ENCODE measurements at regions of chr1 and their contacts with region 1.

Region 1: GRCh38 chr1:19704247-19705113 is 39.8 kb downstream of the HTR6 start:
- DNase-seq: peak; percentile 90
- ATAC-seq: peak; percentile 93
- H3K4me3 Mint-ChIP-seq: peak overlapping the region; percentile 33
- H3K27ac Mint-ChIP-seq: no peak overlapping the region
- H3K4me1 Mint-ChIP-seq: peaks cover 14% of the 10 kb centered on the region
- H3K27me3 Mint-ChIP-seq: no peaks in the 10 kb centered on the region
- CTCF ChIP-seq: peak; percentile 95

Region 2: DNA sequence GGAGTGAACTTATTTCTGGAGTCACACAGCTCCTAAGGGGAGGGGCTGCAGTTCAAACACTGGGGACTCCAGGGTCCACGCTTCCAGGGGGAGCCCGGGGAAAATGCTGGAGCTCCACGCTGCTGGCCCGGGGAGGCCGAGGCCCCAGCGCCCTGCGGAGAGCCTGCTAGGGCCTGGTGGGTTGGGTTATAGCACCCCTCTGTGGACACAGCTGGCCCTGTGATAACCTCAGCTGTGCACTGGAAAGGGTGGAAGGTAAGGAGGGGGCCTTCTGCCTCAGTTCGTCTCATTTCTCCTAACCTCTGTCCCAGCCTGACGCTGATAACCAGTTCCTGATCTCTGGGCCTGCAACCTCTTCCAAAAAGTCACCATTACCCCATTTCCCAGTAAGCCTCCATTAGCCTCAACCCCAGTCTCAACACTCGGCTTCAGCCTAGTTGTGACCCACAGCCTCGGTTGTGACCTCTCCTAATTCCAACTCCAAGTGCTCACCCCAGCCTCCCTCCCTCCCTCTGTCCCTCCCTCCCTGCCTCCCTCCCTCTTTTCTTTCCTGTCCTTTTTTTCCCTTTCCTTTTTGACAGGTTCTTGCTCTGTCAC is 53.2 kb before region 1 on chr1:
- CTCF ChIA-PET with region 1: interaction called, 23 read pairs
- POLR2A ChIA-PET with region 1: no interaction called
- DNase-seq: peak; percentile 68
- ATAC-seq: peak; percentile 34
- H3K4me3 Mint-ChIP-seq: no peak overlapping the region
- H3K27ac Mint-ChIP-seq: no peak overlapping the region
- H3K4me1 Mint-ChIP-seq: peaks cover 13% of the 10 kb centered on the region
- H3K27me3 Mint-ChIP-seq: peaks cover 7% of the 10 kb centered on the region
- CTCF ChIP-seq: 0 out of 2 replicates have a peak, but pooled peaks have one; percentile 16

Region 3: DNA sequence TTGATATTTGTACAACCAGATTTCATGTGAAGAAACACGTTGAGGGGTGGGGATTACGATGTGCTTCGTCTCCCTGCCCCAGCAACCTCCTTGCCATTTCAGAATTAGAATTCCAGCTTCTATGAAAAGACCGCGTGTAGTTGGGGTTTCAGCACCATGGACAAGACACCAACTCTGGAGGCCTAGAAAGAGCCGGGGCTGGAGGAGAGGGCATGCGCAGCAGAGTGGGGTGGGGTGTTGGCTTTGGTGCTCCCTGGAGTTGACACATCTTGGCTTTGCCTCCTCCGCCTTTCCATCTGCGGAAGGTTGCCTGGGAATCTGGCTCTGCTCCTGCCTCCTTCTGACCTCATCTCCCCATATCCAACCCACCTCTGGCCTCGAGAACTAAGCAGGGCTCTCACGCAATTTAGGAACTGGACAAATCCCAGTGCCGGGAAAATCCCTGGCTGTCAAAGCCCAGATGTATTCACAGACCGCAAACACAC is 28.0 kb before region 1 on chr1:
- CTCF ChIA-PET with region 1: interaction called, 38 read pairs
- POLR2A ChIA-PET with region 1: interaction called, 3 read pairs
- DNase-seq: peak; percentile 81
- ATAC-seq: peak; percentile 93
- H3K4me3 Mint-ChIP-seq: no peak overlapping the region
- H3K27ac Mint-ChIP-seq: no peak overlapping the region
- H3K4me1 Mint-ChIP-seq: no peaks in the 10 kb centered on the region
- H3K27me3 Mint-ChIP-seq: peaks cover 22% of the 10 kb centered on the region
- CTCF ChIP-seq: no peak

Region 4: DNA sequence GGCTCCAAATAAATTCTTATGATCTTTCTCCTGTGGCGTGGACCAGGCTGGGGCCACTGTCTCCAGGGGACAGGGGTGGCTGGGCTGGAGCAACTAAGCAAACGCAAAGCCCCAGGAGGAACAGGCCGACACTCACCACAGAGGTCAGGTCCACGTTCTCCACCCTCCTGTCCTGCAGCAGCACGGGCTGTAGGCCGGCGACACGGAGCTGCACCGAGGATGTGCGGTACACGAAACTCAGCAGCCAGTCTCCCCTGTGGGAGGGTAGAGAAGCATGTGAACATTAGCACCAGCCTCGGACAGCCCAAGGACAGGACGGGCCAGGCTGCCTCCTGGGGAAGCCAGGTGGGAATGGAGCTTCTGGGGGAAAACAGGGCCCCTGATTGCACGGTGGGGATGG is 10.2 kb before region 1 on chr1:
- CTCF ChIA-PET with region 1: interaction called, 28 read pairs
- POLR2A ChIA-PET with region 1: no interaction called
- DNase-seq: no peak
- ATAC-seq: no peak
- H3K4me3 Mint-ChIP-seq: no peak overlapping the region
- H3K27ac Mint-ChIP-seq: peak overlapping the region; percentile 49; the same call in 1 of the 2 replicates
- H3K4me1 Mint-ChIP-seq: peaks cover 3% of the 10 kb centered on the region
- H3K27me3 Mint-ChIP-seq: no peaks in the 10 kb centered on the region; the same call in 1 of the 2 replicates
- CTCF ChIP-seq: no peak

Region 5: DNA sequence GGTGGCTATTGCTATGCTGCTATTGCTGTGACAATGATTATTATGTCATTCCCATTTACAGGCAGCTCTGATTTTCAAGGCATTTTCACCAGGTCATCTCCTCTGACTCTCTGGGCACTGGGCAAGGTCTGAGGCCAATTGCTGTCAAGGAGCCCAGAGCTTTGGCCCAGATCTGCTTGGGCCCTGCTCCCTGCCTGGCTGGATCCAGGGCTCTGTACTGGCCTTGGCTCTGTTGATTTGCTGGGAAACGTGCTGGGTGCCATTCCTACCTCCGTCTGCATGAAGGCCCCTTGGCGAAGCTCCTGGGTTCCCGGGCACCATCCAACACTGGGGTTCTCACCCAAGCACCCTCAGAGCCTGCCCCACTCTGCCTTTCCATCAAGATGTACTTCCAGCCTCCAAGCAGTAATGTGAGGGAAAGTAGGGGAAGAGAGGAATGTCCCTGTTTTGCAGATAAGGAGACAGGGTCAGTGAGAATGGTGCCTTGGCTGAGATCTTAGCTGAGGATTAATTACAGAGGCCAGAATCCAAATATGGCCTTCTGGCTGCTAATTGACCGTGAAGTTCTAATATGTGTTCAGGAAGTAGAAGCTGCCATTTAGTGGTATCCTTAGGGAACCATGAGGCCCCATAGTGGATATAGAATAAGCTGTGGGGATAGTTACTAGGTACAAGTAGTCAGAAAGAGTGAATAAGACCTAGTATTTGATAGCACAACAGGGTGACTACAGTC is 24.1 kb after region 1 on chr1:
- CTCF ChIA-PET with region 1: interaction called, 17 read pairs
- POLR2A ChIA-PET with region 1: no interaction called
- DNase-seq: no peak
- ATAC-seq: no peak
- H3K4me3 Mint-ChIP-seq: no peak overlapping the region
- H3K27ac Mint-ChIP-seq: no peak overlapping the region
- H3K4me1 Mint-ChIP-seq: peaks cover 2% of the 10 kb centered on the region
- H3K27me3 Mint-ChIP-seq: no peaks in the 10 kb centered on the region
- CTCF ChIP-seq: no peak

Measured in WTC11 (cell line).